Right cardiac atrium (tissue), 5 donors: ENCODE measurements at regions of chr10 and their contacts with region 1.

Region 1: GRCh38 chr10:43436400-43437140 is at the start of gene ZNF487:
- DNase-seq: peak; percentile 91 to 96 (median 96)
- ATAC-seq: peak; percentile 99
- H3K4me3 ChIP-seq: peak within 1 kb of the TSS; percentile 74
- H3K27ac ChIP-seq: peak within 1 kb of the TSS; percentile 95
- H3K4me1 ChIP-seq: no peaks in the 10 kb centered on the region
- H3K27me3 ChIP-seq: no peaks in the 10 kb centered on the region
- total RNA-seq, gene ZNF487: 3.0 to 4.0 (median 3.4) TPM

Region 2: DNA sequence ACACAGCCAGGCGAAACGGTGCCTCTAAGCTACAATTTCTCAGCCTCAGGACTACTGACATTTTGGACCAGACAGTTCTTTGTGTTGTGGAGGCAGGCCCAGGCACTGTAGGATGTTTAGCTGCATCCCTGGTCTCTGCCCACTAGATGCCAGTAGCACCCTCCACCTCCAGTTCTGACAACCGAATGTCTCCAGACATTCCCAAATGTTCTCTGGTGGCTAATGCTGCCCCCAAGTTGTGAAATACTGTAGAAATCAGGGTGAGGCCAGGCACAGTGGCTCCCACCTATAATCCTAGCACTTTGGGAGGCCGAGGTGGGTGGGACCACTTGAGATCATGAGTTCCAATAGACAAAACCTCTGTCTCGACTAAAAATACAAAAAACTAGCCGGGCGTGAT is 45.8 kb before region 1 on chr10:
- intact Hi-C with region 1: loop called in 2 of 4 experiments (anchors 5 kb)
- DNase-seq: no peak
- ATAC-seq: peak; percentile 57 to 60
- H3K4me3 ChIP-seq: no peak overlapping the region
- H3K27ac ChIP-seq: no peak overlapping the region
- H3K4me1 ChIP-seq: peaks cover 2% of the 10 kb centered on the region
- H3K27me3 ChIP-seq: no peaks in the 10 kb centered on the region

Region 3: GRCh38 chr10:43396928-43397624 is 39.5 kb before region 1 on chr10:
- intact Hi-C with region 1: loop called in 2 of 4 experiments (anchors 5 kb)
- DNase-seq: peak; percentile 90 to 95 (median 94)
- ATAC-seq: peak; percentile 91 to 92
- H3K4me3 ChIP-seq: peak overlapping the region; percentile 86
- H3K27ac ChIP-seq: peak overlapping the region; percentile 94
- H3K4me1 ChIP-seq: peaks cover 10% of the 10 kb centered on the region
- H3K27me3 ChIP-seq: no peaks in the 10 kb centered on the region